ENCODE measurements at regions of chr12 and their contacts with region 1.

Region 1: GRCh38 chr12:1093166-1093751 is 102.2 kb downstream of the ERC1 start:
- DNase-seq: peak; percentile 71
- ATAC-seq: peak; percentile 88
- H3K4me3 ChIP-seq: no peak overlapping the region
- H3K27ac ChIP-seq: no peak overlapping the region
- H3K4me1 ChIP-seq: peaks cover 8% of the 10 kb centered on the region; the same call in 1 of the 2 replicates
- H3K27me3 ChIP-seq: no peaks in the 10 kb centered on the region
- CTCF ChIP-seq: peak; percentile 74
- EP300 ChIP-seq: no peak
- POLR2A ChIP-seq: no peak
- RAD21 ChIP-seq: peak; percentile 48; the same call in 1 of the 2 replicates

Region 2: GRCh38 chr12:949453-950191 is 143.6 kb before region 1 on chr12 and contains the start of gene RAD52:
- CTCF ChIA-PET with region 1: no interaction called
- POLR2A ChIA-PET with region 1: interaction called, 8 read pairs
- in situ Hi-C with region 1: no loop called
- intact Hi-C with region 1: loop called (anchors 5 kb)
- DNase-seq: peak; percentile 96
- ATAC-seq: peak; percentile 92
- H3K4me3 ChIP-seq: peak within 1 kb of the TSS; percentile 78 to 85 (median 78)
- H3K27ac ChIP-seq: peak within 1 kb of the TSS; percentile 82
- H3K4me1 ChIP-seq: peaks cover 52% of the 10 kb centered on the region
- H3K27me3 ChIP-seq: no peaks in the 10 kb centered on the region; a peak in 1 of 5 replicates
- CTCF ChIP-seq: peak; percentile 99
- EP300 ChIP-seq: peak in 1 of 2 experiments; percentile 45; a peak in 2 of 4 replicates
- POLR2A ChIP-seq: peak; percentile 65 to 91; a peak in 3 of 4 replicates
- RAD21 ChIP-seq: peak; percentile 94
- total RNA-seq, gene RAD52: 13.5 and 19.9 TPM in 2 replicates

Region 3: DNA sequence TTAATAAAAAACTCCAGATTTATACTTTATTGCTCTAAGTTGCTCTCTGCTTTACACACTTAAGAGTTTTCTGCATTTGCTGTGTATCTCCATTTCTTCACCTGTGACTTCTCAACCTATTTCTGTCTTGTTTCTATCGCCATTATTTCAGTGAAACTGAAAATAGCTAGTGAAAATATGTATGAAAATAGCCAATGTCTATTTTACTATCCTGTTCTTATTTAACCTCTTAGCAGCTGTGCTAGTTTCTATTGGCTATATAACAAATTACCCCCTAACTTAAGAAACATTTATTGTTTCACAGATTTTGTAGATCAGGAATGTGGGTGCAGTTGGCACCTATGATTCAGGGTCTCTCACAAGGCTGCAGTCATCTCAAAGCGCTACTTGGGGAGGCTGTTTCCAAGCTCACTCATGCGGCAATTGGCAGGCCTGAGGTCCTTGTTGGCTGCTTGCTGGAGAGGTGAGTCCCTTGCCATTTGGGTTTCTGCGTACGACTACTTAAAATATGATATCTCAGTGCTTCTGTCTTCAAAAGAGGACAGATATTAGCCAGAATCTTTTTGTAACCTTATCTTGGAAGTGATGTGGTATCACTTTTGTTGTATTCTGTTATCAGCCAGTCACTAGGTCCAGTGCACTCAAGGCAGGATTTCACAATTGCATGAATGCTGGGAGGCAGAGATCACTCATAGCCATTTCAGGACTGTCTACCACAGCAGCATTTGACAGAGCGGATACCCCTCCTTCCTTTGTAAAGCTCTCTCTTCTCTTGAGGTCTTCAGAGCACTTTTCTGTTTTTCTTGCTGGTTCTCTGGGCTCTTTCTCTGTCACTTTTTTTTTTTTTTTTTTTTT is 95.0 kb before region 1 on chr12:
- CTCF ChIA-PET with region 1: no interaction called
- POLR2A ChIA-PET with region 1: no interaction called
- in situ Hi-C with region 1: no loop called
- intact Hi-C with region 1: loop called (anchors 5 kb)
- DNase-seq: peak; percentile 68
- ATAC-seq: peak; percentile 99
- H3K4me3 ChIP-seq: no peak overlapping the region
- H3K27ac ChIP-seq: peak overlapping the region; percentile 8
- H3K4me1 ChIP-seq: peaks cover 39% of the 10 kb centered on the region
- H3K27me3 ChIP-seq: no peaks in the 10 kb centered on the region
- CTCF ChIP-seq: no peak
- EP300 ChIP-seq: peak in 1 of 2 experiments; percentile 40; a peak in 1 of 4 replicates
- POLR2A ChIP-seq: no peak
- RAD21 ChIP-seq: no peak

Region 4: DNA sequence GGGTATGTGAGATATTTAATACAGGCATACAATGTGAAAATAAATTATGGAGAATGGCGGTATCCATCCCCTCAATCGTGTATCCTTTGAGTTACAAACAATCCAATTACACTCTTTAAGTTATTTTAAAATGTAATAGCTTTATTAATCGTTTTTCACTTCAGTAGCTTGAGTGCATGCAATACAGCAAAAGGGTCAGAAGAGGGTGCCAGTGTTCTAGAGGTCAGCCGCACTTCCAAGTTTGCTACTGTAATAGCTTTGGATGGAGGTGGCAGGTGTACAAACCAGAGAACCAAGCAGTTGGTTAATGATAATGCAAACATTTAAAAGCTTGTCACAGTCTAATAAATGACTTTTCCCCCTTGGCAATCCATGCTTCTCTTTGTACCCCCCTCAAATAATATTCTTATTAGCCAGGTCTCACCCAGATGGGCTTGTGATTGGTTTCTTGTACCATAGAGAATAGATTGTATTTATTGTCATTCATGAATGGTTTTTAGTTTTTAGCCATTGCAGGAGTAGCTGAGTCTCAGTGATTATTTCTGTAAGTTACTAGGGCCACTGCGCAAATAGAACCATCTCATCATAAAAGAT is 24.8 kb after region 1 on chr12:
- CTCF ChIA-PET with region 1: no interaction called
- POLR2A ChIA-PET with region 1: no interaction called
- in situ Hi-C with region 1: no loop called
- intact Hi-C with region 1: no loop called
- DNase-seq: peak; percentile 40
- ATAC-seq: no peak
- H3K4me3 ChIP-seq: no peak overlapping the region
- H3K27ac ChIP-seq: no peak overlapping the region
- H3K4me1 ChIP-seq: no peaks in the 10 kb centered on the region
- H3K27me3 ChIP-seq: no peaks in the 10 kb centered on the region
- CTCF ChIP-seq: peak; percentile 86
- EP300 ChIP-seq: no peak
- POLR2A ChIP-seq: no peak
- RAD21 ChIP-seq: peak; percentile 87

Region 5: DNA sequence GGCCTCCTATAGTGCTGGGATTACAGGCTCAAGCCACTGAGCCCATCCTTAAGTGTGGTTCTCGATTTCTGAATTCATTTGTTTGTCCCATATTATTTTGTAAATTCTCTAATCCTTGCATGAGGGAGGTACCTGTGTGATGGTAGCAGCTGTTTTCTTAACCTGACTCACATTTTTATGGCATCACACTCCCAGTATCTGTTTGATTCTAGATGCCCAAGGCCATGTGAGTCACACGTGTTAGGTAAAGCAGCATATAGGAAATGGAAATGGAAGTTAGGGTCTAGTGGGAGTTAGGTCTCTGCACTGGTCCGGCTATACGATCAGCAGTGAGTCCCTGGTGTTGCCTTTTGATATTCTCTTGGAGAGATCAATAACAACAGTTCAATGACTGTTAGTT is 95.9 kb after region 1 on chr12:
- CTCF ChIA-PET with region 1: no interaction called
- POLR2A ChIA-PET with region 1: no interaction called
- in situ Hi-C with region 1: no loop called
- intact Hi-C with region 1: no loop called
- DNase-seq: no peak
- ATAC-seq: no peak
- H3K4me3 ChIP-seq: no peak overlapping the region
- H3K27ac ChIP-seq: no peak overlapping the region
- H3K4me1 ChIP-seq: peaks cover 11% of the 10 kb centered on the region
- H3K27me3 ChIP-seq: no peaks in the 10 kb centered on the region
- CTCF ChIP-seq: no peak
- EP300 ChIP-seq: no peak
- POLR2A ChIP-seq: no peak
- RAD21 ChIP-seq: no peak

Measured in HepG2 (cell line).